Activated CD4-positive, alpha-beta T cell treated with anti-CD3 and anti-CD28 coated beads, Interleukin-2, amount 10 ng/mL, durations not matched to agents 24 days and 14 days (primary cell): ENCODE measurements at regions of chrX and their contacts with region 1.

Region 1: GRCh38 chrX:135521405-135522189 is 1.1 kb downstream of the INTS6L start:
- DNase-seq: peak; percentile 94
- H3K4me3 Mint-ChIP-seq: peak overlapping the region; percentile 92
- H3K27ac Mint-ChIP-seq: peak overlapping the region; percentile 99
- H3K4me1 Mint-ChIP-seq: peaks cover 31% of the 10 kb centered on the region
- H3K27me3 Mint-ChIP-seq: no peaks in the 10 kb centered on the region

Region 2: GRCh38 chrX:134171661-134172587 is 1349.7 kb before region 1 on chrX:
- intact Hi-C with region 1: loop called (anchors 5 kb)
- DNase-seq: peak; percentile 84
- H3K4me3 Mint-ChIP-seq: peak overlapping the region; percentile 98
- H3K27ac Mint-ChIP-seq: peak overlapping the region; percentile 98
- H3K4me1 Mint-ChIP-seq: peaks cover 19% of the 10 kb centered on the region
- H3K27me3 Mint-ChIP-seq: peaks cover 2% of the 10 kb centered on the region

Region 3: DNA sequence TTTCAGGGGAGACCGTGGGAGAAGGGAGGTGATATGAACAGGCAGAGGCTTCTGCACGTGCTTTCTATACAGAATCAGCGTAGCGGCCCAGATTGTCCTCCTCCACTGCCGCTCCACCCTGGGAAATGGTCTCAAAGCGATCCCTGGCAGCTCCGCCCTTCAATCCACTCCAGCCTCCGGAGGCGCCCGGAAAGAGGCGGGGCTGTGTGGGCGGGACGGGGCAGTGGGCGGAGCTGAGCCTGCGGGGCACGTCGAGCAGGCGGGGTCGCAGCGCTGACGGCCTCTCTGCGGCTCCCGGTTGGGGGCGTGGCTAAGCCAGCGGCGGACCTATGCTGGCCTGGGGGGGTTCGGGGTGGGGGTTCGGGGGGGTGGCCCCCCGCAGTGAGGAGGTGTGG is 100.1 kb before region 1 on chrX:
- intact Hi-C with region 1: loop called (anchors 1 kb)
- DNase-seq: peak; percentile 97
- H3K4me3 Mint-ChIP-seq: peak overlapping the region; percentile 68
- H3K27ac Mint-ChIP-seq: no peak overlapping the region
- H3K4me1 Mint-ChIP-seq: peaks cover 7% of the 10 kb centered on the region
- H3K27me3 Mint-ChIP-seq: peaks cover 13% of the 10 kb centered on the region

Region 4: GRCh38 chrX:135536877-135537276 is 15.3 kb after region 1 on chrX:
- intact Hi-C with region 1: loop called (anchors 2 kb)
- DNase-seq: peak; percentile 54
- H3K4me3 Mint-ChIP-seq: peak overlapping the region; percentile 45
- H3K27ac Mint-ChIP-seq: peak overlapping the region; percentile 71
- H3K4me1 Mint-ChIP-seq: peaks cover 28% of the 10 kb centered on the region
- H3K27me3 Mint-ChIP-seq: no peaks in the 10 kb centered on the region

Region 5: DNA sequence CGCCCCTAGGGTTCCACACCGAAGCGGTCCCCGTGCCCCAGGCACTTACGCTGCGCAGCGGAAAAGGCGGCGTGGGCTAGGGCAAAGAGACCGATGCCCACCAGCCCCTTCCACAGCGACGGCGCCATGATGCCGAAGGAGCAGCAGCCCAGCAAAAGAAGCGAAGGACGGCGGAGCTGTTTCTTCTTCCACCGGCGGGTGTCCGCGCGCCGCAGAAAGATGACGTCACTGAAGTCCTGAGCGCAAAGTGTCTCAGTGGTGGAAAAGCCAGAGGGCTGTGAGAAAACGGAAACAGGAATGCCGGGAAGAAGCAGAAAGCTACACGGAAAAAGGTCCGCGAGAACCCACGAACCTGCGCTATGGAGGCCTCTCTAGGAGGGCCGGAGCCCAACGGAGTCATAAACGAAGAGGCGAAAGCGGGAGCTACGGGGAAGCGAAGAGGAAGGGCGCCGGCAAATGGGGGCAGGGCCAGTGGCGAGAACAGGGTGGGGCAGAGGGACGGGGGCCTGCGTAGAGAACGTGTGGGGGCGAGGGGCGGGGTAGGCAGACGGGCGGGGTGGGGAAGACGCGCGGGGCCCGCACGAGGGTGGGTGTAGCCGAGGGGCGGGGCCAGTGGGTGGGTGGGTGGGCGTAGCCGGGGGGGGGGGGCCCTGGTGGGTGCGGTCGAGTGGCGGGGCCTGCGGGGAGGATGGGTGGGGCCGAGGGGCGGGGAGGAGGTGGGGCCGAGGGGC is 452.1 kb after region 1 on chrX and contains the start of gene MMGT1:
- intact Hi-C with region 1: loop called (anchors 2 kb)
- DNase-seq: peak; percentile 93
- H3K4me3 Mint-ChIP-seq: peak within 1 kb of the TSS; percentile 100
- H3K27ac Mint-ChIP-seq: peak within 1 kb of the TSS; percentile 99
- H3K4me1 Mint-ChIP-seq: peaks cover 28% of the 10 kb centered on the region
- H3K27me3 Mint-ChIP-seq: peaks cover 3% of the 10 kb centered on the region
- total RNA-seq, gene MMGT1: 27.1 and 27.4 TPM in 2 replicates